B cell (primary cell): ENCODE measurements at regions of chr19 and their contacts with region 1.

Region 1: DNA sequence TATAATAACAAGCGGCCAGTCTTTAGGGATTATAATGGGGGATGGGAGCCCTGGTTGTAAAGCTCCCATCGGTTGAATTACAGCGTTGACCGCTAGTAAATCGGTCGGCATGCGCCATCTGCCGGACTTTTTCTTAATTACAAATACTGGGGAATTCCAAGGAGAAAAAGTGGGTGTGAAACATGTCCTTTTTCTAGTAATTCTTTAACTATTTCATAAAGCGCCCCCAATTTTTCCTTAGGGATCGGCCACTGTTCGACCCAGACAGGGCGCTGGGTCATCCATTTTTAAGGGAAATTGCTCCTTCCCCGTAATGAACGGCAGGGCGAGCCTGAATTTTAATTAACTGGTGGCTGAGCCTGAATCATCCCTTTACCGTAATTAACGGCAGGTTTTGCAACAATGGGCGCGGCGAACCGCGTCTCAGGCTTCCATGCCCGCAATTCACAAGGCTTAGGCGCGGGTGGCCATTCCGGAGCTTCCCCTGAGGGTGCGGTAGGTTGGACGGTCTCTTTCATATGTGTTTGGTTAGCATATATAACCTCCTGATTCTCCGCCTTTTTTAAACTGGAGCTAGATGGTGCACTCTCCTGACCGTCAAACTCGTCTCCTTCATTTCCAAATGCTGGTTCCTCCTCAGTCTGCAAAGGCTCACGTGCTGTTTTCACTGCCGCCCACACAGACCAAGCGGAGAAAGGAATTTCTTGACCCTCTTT is 30.2 kb upstream of the EVI5L start:
- DNase-seq: peak; percentile 79
- ATAC-seq: peak; percentile 64
- H3K4me3 ChIP-seq: peak overlapping the region in 4 of 5 experiments; percentile 17 to 27 (median 20)
- H3K4me3 Mint-ChIP-seq: peak overlapping the region; percentile 60
- H3K27ac ChIP-seq: no peak overlapping the region
- H3K27ac Mint-ChIP-seq: no peak overlapping the region
- H3K4me1 ChIP-seq: peaks cover 7 to 16% of the 10 kb centered on the region in 2 donors
- H3K4me1 Mint-ChIP-seq: peaks cover 9% of the 10 kb centered on the region
- H3K27me3 ChIP-seq: peaks cover 0 to 13% (median 3%) of the 10 kb centered on the region in 4 experiments
- H3K27me3 Mint-ChIP-seq: peaks cover 10% of the 10 kb centered on the region
- CTCF ChIP-seq: peak; percentile 84

Region 2: GRCh38 chr19:7652061-7652641 is 147.6 kb before region 1 on chr19:
- CTCF ChIA-PET with region 1: interaction called, 100 read pairs
- POLR2A ChIA-PET with region 1: interaction called, 6 read pairs
- intact Hi-C with region 1: loop called (anchors 1 kb)
- DNase-seq: peak; percentile 87
- ATAC-seq: peak; percentile 90
- H3K4me3 ChIP-seq: peak overlapping the region; percentile 32 to 74 (median 49)
- H3K4me3 Mint-ChIP-seq: peak overlapping the region; percentile 81
- H3K27ac ChIP-seq: no peak overlapping the region
- H3K27ac Mint-ChIP-seq: peak overlapping the region; percentile 70
- H3K4me1 ChIP-seq: peaks cover 0 to 6% of the 10 kb centered on the region in 2 donors
- H3K4me1 Mint-ChIP-seq: peaks cover 8% of the 10 kb centered on the region
- H3K27me3 ChIP-seq: no peaks in the 10 kb centered on the region
- H3K27me3 Mint-ChIP-seq: no peaks in the 10 kb centered on the region
- CTCF ChIP-seq: peak; percentile 98

Region 3: DNA sequence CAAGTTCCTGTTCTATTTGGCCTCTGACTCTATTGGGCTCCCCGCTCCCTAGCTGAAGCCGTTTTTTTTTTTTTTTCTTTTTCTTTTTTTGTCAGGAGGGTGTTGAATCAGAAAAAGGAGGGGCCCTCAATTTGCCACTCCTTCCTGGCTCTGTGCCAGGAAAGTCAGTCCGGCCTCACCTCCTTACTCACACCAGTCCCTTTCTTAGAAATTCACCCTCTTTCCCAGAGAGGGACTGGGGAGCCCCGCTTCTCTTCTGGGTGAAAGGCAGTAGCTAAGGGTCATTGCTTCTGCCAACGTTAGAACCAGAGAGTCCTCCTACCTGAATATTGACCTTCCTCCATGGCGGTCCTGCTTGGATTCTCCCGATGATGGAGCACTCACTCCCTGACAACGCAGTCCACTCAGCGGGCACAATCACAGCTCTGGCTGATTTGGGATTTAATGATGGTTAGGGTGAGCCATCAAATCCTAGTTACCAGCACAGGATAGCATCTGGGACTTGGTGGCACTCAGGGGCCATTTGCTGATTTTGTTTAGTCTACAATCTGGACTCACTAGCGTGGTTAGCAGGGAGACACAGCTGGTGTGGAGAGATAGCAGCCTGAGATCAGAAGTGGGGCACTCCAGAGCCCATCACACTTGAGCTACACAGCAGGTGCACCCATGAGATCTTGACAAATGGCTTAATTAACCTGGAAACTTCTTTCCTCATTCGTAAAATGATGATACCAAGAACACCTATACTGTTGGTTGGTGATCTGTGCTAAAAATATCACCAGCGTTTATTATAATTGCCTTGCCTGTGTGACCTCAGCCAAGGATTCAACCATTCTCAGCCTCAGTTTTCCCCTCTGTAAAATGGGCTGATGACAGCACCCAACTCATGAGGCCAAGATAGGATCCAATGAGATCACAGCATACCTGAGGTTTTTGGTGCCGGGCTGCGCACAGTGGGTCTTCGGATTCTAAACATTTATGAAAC is 100.1 kb before region 1 on chr19:
- CTCF ChIA-PET with region 1: interaction called, 58 read pairs
- POLR2A ChIA-PET with region 1: no interaction called
- intact Hi-C with region 1: loop called (anchors 5 kb)
- DNase-seq: peak; percentile 62
- ATAC-seq: peak; percentile 4
- H3K4me3 ChIP-seq: peak overlapping the region in 4 of 5 experiments; percentile 31 to 77 (median 56)
- H3K4me3 Mint-ChIP-seq: peak overlapping the region; percentile 80
- H3K27ac ChIP-seq: peak overlapping the region; percentile 51 to 60
- H3K27ac Mint-ChIP-seq: peak overlapping the region; percentile 93
- H3K4me1 ChIP-seq: peaks cover 88 to 97% of the 10 kb centered on the region in 2 donors
- H3K4me1 Mint-ChIP-seq: peaks cover 79% of the 10 kb centered on the region
- H3K27me3 ChIP-seq: no peaks in the 10 kb centered on the region
- H3K27me3 Mint-ChIP-seq: no peaks in the 10 kb centered on the region
- CTCF ChIP-seq: no peak

Region 4: DNA sequence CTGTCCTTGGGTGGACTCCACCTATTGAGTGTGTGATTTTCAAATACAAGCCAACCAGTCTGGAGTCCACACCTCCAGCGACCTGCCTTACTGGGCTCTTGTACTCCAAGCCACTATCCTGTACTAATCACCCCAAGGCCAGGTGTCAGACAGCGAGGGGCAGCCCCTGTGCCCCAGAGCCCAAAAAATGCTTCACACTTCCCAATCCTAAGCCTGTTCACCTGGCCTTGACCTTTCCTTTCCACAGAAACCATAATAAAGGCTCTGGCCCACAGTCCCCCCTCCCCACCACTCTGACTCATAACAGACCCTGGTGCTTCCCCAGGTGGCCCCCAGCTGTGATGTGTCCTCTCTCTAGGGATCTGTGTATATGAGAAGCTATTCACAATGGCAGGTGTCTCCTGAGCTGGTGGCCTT is 56.4 kb before region 1 on chr19:
- CTCF ChIA-PET with region 1: interaction called, 11 read pairs
- POLR2A ChIA-PET with region 1: no interaction called
- intact Hi-C with region 1: loop called (anchors 5 kb)
- DNase-seq: peak; percentile 43
- ATAC-seq: peak; percentile 88
- H3K4me3 ChIP-seq: no peak overlapping the region
- H3K4me3 Mint-ChIP-seq: peak overlapping the region; percentile 30
- H3K27ac ChIP-seq: no peak overlapping the region
- H3K27ac Mint-ChIP-seq: no peak overlapping the region
- H3K4me1 ChIP-seq: peaks cover 28 to 30% of the 10 kb centered on the region in 2 donors
- H3K4me1 Mint-ChIP-seq: peaks cover 52% of the 10 kb centered on the region
- H3K27me3 ChIP-seq: peaks cover 0 to 5% (median 0%) of the 10 kb centered on the region in 4 experiments
- H3K27me3 Mint-ChIP-seq: peaks cover 8% of the 10 kb centered on the region
- CTCF ChIP-seq: no peak

Region 5: DNA sequence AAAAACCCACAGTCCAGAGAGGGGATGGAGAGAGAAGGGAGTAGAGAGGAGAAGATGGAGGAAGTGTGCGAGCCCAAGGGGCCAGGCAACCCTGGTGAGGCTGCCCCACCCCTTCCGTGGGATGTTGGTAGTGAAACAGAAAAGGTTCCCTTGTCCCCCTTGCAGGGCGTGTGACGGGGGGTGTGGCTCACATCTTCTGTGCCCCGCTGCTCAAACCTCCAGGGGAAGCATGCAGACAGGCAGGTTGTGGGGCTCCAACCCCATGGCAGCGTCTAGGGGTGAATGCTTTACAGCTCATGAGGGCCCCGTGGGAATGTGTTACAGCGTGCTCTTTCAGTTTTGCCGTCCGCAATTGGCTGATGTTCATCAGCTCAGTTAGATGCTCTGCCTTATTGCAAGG is 15.5 kb after region 1 on chr19:
- CTCF ChIA-PET with region 1: interaction called, 11 read pairs
- POLR2A ChIA-PET with region 1: interaction called, 15 read pairs
- intact Hi-C with region 1: no loop called
- DNase-seq: peak; percentile 71
- ATAC-seq: peak; percentile 86
- H3K4me3 ChIP-seq: peak overlapping the region in 4 of 5 experiments; percentile 1 to 55 (median 34)
- H3K4me3 Mint-ChIP-seq: peak overlapping the region; percentile 67
- H3K27ac ChIP-seq: peak overlapping the region; percentile 17 to 60
- H3K27ac Mint-ChIP-seq: peak overlapping the region; percentile 81
- H3K4me1 ChIP-seq: peaks cover 11 to 17% of the 10 kb centered on the region in 2 donors
- H3K4me1 Mint-ChIP-seq: peaks cover 26% of the 10 kb centered on the region
- H3K27me3 ChIP-seq: peaks cover 0 to 14% (median 2%) of the 10 kb centered on the region in 4 experiments
- H3K27me3 Mint-ChIP-seq: peaks cover 11% of the 10 kb centered on the region
- CTCF ChIP-seq: no peak

Region 6: GRCh38 chr19:7986321-7987083 is 186.7 kb after region 1 on chr19:
- CTCF ChIA-PET with region 1: no interaction called
- POLR2A ChIA-PET with region 1: no interaction called
- intact Hi-C with region 1: no loop called
- DNase-seq: no peak
- ATAC-seq: no peak
- H3K4me3 ChIP-seq: no peak overlapping the region
- H3K4me3 Mint-ChIP-seq: no peak overlapping the region
- H3K27ac ChIP-seq: no peak overlapping the region
- H3K27ac Mint-ChIP-seq: no peak overlapping the region
- H3K4me1 ChIP-seq: no peaks in the 10 kb centered on the region
- H3K4me1 Mint-ChIP-seq: peaks cover 2% of the 10 kb centered on the region
- H3K27me3 ChIP-seq: no peaks in the 10 kb centered on the region
- H3K27me3 Mint-ChIP-seq: no peaks in the 10 kb centered on the region
- CTCF ChIP-seq: no peak